Ascending aorta (tissue), 2 donors: ENCODE measurements at regions of chr17 and their contacts with region 1.

Region 1: GRCh38 chr17:81702971-81703746 is at the start of gene MRPL12:
- DNase-seq: peak; percentile 57 to 94
- H3K4me3 ChIP-seq: peak within 1 kb of the TSS; percentile 76 to 83
- H3K27ac ChIP-seq: peak within 1 kb of the TSS; percentile 87 to 96
- H3K4me1 ChIP-seq: peaks cover 19 to 20% of the 10 kb centered on the region in 2 donors
- H3K27me3 ChIP-seq: no peaks in the 10 kb centered on the region
- CTCF ChIP-seq: peak in 2 of 3 experiments; percentile 20 to 51
- total RNA-seq, gene MRPL12: 21.8 TPM

Region 2: DNA sequence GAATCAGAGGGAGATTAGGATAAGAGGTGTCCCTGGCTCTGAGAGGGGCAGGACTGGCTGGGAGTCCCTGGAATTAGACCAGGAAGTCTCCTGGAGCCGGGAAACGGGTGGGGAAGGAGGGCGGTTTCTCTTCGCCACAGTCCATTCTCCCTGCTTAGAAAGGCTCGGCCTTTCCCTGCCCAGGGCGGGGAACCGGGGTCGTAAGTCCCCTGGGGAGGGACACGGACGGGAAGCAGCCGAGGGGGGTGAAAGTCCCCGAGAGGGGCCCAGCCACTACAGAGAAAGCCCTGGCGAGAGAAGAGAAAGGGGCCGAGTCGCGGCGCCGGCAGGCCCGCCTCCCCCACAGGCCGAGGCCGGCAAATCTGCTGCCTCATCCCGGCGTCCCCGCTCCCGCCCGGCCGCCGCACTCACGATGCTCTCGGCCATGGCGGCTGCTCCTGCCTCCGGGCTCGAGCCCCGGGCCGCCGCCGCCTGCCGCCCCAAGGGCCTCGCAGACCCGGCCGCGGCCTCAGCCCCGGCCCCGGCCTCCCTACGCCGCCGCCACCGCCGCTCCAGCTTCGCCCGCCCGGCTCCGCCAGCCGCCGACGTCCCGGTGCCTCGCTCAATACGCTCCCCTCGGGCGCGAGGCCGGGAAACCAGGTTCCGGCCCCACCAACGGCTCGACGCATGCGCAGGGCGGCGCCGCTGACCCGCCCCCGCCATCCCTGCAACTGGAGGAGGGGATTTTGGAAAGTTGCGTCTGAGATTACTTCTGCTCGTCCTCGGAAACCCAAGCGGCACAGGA is 66.5 kb before region 1 on chr17 and contains the starts of genes NPLOC4 and TSPAN10:
- intact Hi-C with region 1: loop called (anchors 5 kb)
- DNase-seq: peak; percentile 14 to 90
- H3K4me3 ChIP-seq: peak within 1 kb of the TSS; percentile 80 to 89
- H3K27ac ChIP-seq: peak within 1 kb of the TSS; percentile 78 to 85
- H3K4me1 ChIP-seq: peaks cover 9 to 17% of the 10 kb centered on the region in 2 donors
- H3K27me3 ChIP-seq: no peaks in the 10 kb centered on the region
- CTCF ChIP-seq: peak in 1 of 3 experiments; percentile 7
- total RNA-seq, gene NPLOC4: 128 TPM
- total RNA-seq, gene TSPAN10: not detected

Region 3: GRCh38 chr17:81683584-81684237 is 19.4 kb before region 1 on chr17 and contains the starts of genes ARL16 and HGS:
- intact Hi-C with region 1: loop called (anchors 1 kb)
- DNase-seq: peak; percentile 95 to 99
- H3K4me3 ChIP-seq: peak within 1 kb of the TSS; percentile 66 to 84
- H3K27ac ChIP-seq: peak within 1 kb of the TSS; percentile 82 to 89
- H3K4me1 ChIP-seq: peaks cover 14 to 20% of the 10 kb centered on the region in 2 donors
- H3K27me3 ChIP-seq: no peaks in the 10 kb centered on the region
- CTCF ChIP-seq: no peak
- total RNA-seq, gene ARL16: 21.0 TPM
- total RNA-seq, gene HGS: 211 TPM

Region 4: DNA sequence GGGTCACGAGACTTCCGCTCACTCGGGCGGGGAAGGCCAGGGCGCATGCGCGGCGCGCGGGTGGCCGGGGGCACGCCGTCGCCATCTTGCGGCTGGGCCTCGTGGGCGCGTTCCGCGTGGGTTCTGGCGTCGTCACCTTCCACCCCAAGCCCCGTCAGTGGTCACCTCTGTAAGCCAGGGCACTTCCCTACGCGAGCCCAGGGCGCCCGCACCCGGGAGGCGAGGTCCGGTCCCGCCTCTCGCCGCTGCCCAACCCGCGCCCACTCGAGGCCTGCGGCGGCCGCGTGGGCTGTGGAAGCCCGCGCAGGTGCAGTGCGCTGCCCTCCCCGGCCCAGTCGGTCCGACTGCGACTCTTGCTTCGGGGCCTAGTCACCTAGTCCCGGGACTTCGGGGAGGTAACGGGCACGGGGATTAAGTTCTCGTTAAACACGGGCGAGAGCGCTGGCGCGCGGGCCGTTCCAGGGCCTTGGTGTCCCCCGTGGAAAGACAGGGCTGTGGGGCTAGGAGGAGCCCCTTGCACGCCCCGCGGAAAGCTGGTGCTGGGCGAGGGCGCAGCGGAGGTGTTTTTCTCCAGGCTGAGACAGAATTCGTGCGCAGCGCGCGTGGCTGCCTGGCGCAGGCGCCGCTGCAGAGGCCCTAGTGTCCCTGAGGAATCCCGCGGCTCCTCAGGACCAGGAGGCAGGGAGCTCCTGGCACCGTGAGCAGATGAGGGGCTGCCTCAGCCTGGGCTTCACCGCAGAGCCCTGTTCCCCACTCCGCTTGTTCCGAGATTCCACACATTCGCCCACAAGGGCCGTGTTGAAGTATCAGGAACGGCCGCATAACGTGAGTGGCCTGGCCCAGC is 168.4 kb after region 1 on chr17:
- intact Hi-C with region 1: no loop called
- DNase-seq: peak; percentile 74 to 96
- H3K4me3 ChIP-seq: peak overlapping the region; percentile 83 to 95
- H3K27ac ChIP-seq: peak overlapping the region; percentile 96 to 99
- H3K4me1 ChIP-seq: peaks cover 18 to 32% of the 10 kb centered on the region in 2 donors
- H3K27me3 ChIP-seq: no peaks in the 10 kb centered on the region
- CTCF ChIP-seq: peak; percentile 27 to 53 (median 53)

Region 5: DNA sequence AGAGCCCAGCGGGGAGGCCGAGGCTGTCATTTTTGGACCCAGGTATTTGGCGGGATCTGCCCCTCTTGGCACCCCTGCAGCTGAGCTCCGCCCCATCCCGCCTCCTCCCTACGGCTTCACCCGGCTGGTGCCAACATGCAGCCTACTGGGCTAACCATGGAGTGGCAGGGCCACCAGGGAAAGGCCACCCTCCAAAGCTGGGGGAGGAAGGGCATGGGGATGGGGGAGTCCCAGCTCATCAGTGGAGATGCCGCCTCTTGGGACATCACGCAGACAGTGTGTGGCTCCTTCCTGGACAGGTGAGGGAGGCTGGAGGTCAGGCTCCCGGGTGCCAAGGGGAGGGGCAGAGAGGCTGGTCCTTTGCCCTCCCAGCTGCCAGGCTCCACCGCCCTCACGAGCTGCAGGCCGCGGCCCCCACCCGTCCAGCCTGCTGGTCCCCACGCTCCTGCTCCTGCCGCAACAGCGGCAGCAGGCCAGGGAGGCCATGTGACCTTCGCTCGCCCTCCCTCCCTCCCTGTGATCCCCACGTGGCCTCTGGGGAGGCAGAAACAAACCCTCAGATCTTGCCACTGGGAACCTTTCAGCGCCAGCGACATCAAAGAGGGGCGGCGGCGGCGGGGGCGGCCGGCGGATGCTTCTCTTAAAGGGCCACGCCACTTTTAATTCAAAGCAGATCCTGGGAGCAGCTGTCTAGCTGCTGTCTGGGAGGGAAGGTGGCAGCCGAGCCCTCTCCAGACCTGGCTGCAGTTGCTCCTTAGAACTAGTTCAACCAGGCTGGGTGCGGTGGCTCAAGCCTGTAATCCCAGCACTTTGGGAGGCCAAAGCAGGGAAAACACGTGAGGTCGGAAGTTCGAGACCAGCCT is 264.6 kb after region 1 on chr17:
- intact Hi-C with region 1: no loop called
- DNase-seq: peak in 1 of 2 donors; percentile 79
- H3K4me3 ChIP-seq: peak overlapping the region; percentile 26 to 44
- H3K27ac ChIP-seq: no peak overlapping the region
- H3K4me1 ChIP-seq: peaks cover 6 to 8% of the 10 kb centered on the region in 2 donors
- H3K27me3 ChIP-seq: no peaks in the 10 kb centered on the region
- CTCF ChIP-seq: no peak